ENCODE measurements at regions of chr4 and their contacts with region 1.

Region 1: DNA sequence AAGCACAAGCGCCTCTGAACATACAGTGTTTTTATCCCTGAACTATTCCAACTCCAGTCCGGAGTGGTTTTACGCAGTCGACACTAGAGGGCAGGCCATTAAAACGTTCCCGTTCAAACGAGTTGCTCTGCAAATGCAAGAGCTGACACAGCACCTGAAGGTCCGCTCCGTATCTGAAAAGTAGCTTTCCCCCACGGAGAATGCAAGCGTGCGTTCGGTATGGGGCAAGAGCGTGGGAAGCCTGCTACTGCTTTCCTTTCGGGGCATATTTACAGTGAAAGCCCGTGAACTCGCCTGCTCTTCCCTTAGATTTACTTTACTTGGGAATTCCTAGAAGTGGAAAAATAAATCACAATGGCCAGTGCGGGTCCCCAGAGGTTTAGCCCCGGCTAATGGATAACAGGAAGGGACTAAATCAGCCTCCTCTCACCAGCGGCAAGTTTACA is 190.8 kb downstream of the TSPAN5 start:
- DNase-seq: peak; percentile 22
- H3K4me3 ChIP-seq: peak overlapping the region; percentile 27 to 67 (median 43)
- H3K27ac ChIP-seq: peak overlapping the region in 3 of 4 donors; percentile 22 to 42 (median 34)
- H3K4me1 ChIP-seq: peaks cover 4 to 30% (median 16%) of the 10 kb centered on the region in 3 donors
- H3K27me3 ChIP-seq: no peaks in the 10 kb centered on the region
- CTCF ChIP-seq: peak; percentile 69 to 90 (median 76)
- POLR2A ChIP-seq: no peak

Region 2: DNA sequence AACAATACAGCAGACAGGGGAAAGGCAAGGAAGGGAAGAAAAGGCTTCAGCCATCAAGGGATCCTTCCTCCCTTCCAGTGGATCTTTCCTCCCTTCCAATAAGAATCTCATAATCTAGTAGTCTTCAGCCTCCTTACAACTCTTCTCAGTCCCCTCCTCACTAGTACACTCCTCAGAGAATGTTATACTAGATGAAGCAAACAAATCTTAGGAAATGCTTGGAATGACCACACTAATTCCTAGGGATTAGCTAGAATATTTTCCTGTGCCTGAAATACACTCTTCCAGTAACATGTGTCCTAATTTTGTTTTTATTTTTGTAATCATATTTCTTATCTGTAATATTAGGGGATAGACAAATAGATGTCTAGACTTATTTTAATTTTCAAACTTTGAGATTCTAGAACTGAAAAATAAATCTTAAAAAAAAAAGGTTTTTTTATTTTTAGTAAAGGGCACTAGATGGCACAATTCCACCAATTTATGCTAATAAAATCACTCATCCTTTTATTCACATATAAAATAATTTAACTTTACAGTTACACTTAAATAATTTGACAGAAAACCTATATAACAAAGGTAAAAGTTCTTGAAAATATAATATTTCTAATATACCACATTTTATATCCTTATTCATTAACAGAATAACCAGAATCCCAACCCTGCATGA is 317.4 kb before region 1 on chr4:
- intact Hi-C with region 1: loop called (anchors 10 kb)
- DNase-seq: no peak
- H3K4me3 ChIP-seq: no peak overlapping the region
- H3K27ac ChIP-seq: no peak overlapping the region
- H3K4me1 ChIP-seq: no peaks in the 10 kb centered on the region
- H3K27me3 ChIP-seq: no peaks in the 10 kb centered on the region
- CTCF ChIP-seq: peak in 2 of 6 experiments; percentile 13 to 19
- POLR2A ChIP-seq: no peak

Measured in esophagus squamous epithelium (tissue), 5 donors.